ENCODE measurements at regions of chr1 and their contacts with region 1.

Region 1: DNA sequence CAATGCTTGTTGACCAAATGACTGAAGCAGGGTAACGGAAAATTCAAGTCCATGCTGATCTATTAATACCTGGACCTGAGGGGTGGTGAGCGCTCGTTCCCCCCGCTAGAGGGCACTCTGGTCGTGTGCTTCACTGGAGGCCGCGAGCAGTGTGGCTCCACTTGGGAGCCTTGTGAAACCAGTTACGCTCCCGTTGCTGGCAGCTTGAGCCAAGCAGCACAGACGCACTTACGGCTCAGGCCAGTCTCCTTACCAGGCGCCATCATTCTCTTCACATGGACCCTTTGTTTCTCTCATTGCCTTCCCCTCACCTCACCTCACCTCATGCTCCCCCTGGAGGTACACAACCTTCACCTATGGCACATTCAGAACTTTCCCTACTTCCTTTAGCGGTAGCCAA is 49.7 kb upstream of the TSPAN2 start:
- H3K4me3 Mint-ChIP-seq: no peak overlapping the region
- H3K27ac Mint-ChIP-seq: no peak overlapping the region
- H3K4me1 Mint-ChIP-seq: peaks cover 5% of the 10 kb centered on the region
- H3K27me3 Mint-ChIP-seq: peaks cover 12% of the 10 kb centered on the region

Region 2: GRCh38 chr1:115062542-115063011 is 76.4 kb before region 1 on chr1:
- intact Hi-C with region 1: no loop called
- H3K4me3 Mint-ChIP-seq: no peak overlapping the region
- H3K27ac Mint-ChIP-seq: no peak overlapping the region
- H3K4me1 Mint-ChIP-seq: peaks cover 21% of the 10 kb centered on the region
- H3K27me3 Mint-ChIP-seq: no peaks in the 10 kb centered on the region

Region 3: DNA sequence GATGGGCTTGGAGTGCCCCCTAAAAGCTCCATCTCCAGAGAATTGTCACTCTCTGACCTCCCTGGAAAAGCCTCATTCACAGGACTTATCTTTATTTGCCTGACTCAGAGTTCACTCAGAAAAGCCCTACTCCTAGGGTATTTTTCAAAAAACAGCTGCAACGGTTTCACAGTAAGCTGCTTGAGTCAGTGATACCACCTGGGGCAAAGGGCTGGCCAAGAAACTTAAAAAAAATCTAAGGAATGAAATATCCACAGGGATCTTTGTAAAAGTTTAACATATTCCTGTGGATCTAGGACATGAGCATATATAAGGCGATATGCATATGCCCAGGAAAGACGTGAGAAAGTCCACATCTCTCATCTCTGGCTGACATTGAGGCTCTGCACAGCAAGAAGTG is 15.9 kb before region 1 on chr1:
- intact Hi-C with region 1: loop called (anchors 2 kb)
- H3K4me3 Mint-ChIP-seq: no peak overlapping the region
- H3K27ac Mint-ChIP-seq: no peak overlapping the region
- H3K4me1 Mint-ChIP-seq: no peaks in the 10 kb centered on the region
- H3K27me3 Mint-ChIP-seq: peaks cover 2% of the 10 kb centered on the region

Region 4: GRCh38 chr1:115469703-115470476 is 330.9 kb after region 1 on chr1:
- intact Hi-C with region 1: loop called (anchors 5 kb)
- H3K4me3 Mint-ChIP-seq: no peak overlapping the region
- H3K27ac Mint-ChIP-seq: no peak overlapping the region
- H3K4me1 Mint-ChIP-seq: peaks cover 7% of the 10 kb centered on the region
- H3K27me3 Mint-ChIP-seq: no peaks in the 10 kb centered on the region

Region 5: GRCh38 chr1:115764541-115764940 is 625.6 kb after region 1 on chr1:
- intact Hi-C with region 1: loop called (anchors 10 kb)
- H3K4me3 Mint-ChIP-seq: no peak overlapping the region
- H3K27ac Mint-ChIP-seq: no peak overlapping the region
- H3K4me1 Mint-ChIP-seq: peaks cover 17% of the 10 kb centered on the region
- H3K27me3 Mint-ChIP-seq: no peaks in the 10 kb centered on the region